A549 (cell line): ENCODE measurements at regions of chr17 and their contacts with region 1.

Region 1: DNA sequence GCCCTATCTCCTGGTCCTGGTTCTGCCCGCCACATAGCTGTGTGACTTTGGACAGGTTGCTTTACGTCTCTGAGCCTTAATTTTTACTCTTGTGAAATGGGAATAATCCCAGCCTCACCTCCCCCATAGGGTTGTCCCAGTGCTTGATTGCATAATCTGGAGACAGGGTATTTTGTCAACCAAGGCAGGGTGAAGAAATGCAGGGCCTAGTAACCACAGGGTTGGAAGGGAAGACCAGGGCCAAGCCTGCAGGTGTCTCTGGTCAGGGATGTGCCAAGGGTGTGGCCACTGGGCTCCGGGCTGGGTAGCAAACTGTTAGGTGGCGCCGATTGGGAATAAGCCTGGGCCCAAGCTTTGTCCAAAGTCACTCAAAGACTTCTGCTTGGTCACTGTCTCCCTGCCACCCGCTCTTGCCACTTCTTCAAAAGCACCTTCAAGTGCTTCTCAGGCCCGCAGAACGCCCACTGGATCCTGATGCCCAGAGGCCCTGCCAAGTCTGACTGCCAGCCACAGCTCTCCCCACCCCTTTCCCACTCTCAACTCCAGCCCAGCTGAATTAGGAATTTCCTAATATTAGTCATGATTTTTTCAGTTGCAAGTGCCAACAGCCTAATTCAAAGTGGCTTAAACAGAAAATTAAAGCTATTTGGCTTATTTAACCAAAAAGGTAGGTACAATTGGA is 20.6 kb upstream of the COL1A1 start:
- DNase-seq: no peak
- ATAC-seq: no peak
- H3K4me3 ChIP-seq: no peak overlapping the region
- H3K27ac ChIP-seq: peak overlapping the region in 1 of 2 experiments; percentile 87; a peak in 3 of 6 replicates
- H3K4me1 ChIP-seq: peaks cover 43% of the 10 kb centered on the region
- CTCF ChIP-seq: no peak
- EP300 ChIP-seq: no peak
- POLR2A ChIP-seq: no peak
- RAD21 ChIP-seq: no peak

Region 2: GRCh38 chr17:50001140-50001714 is 220.8 kb before region 1 on chr17:
- CTCF ChIA-PET with region 1: no interaction called
- POLR2A ChIA-PET with region 1: no interaction called
- DNase-seq: no peak
- ATAC-seq: no peak
- H3K4me3 ChIP-seq: no peak overlapping the region
- H3K27ac ChIP-seq: no peak overlapping the region
- H3K4me1 ChIP-seq: peaks cover 19% of the 10 kb centered on the region
- CTCF ChIP-seq: no peak
- EP300 ChIP-seq: no peak
- POLR2A ChIP-seq: no peak
- RAD21 ChIP-seq: no peak

Region 3: GRCh38 chr17:50161023-50161910 is 60.7 kb before region 1 on chr17:
- CTCF ChIA-PET with region 1: no interaction called
- POLR2A ChIA-PET with region 1: no interaction called
- DNase-seq: peak; percentile 92 to 100
- ATAC-seq: peak; percentile 88 to 96
- H3K4me3 ChIP-seq: peak overlapping the region; percentile 74
- H3K27ac ChIP-seq: peak overlapping the region; percentile 80 to 86
- H3K4me1 ChIP-seq: peaks cover 9% of the 10 kb centered on the region; the same call in 2 of the 3 replicates
- CTCF ChIP-seq: peak; percentile 98
- EP300 ChIP-seq: no peak
- POLR2A ChIP-seq: peak; percentile 92
- RAD21 ChIP-seq: peak; percentile 72 to 80

Region 4: GRCh38 chr17:50238601-50239280 is 16.7 kb after region 1 on chr17:
- CTCF ChIA-PET with region 1: interaction called, 12 read pairs
- POLR2A ChIA-PET with region 1: no interaction called
- DNase-seq: peak in 1 of 2 experiments; percentile 59
- ATAC-seq: peak; percentile 98 to 99
- H3K4me3 ChIP-seq: no peak overlapping the region
- H3K27ac ChIP-seq: no peak overlapping the region
- H3K4me1 ChIP-seq: peaks cover 8% of the 10 kb centered on the region
- CTCF ChIP-seq: no peak
- EP300 ChIP-seq: no peak
- POLR2A ChIP-seq: no peak
- RAD21 ChIP-seq: no peak

Region 5: DNA sequence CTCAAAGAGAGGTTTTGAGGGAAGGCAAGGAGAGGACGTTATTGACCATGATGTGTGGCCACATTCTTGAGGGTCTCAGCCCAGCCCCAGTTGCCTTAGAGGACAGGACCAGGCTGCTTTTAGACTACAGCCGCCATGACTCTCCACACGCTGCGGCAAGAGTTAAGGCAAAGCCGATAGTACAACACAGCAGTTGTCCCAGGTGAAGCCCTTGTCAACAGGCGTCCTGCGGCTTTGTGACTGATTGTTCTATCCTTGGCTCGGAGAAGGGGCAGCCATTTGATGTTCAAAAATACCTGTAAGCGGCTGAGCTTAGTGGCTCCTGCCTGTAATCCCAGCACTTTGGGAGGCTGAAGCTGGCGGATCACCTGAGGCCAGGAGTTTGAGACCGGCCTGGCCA is 81.0 kb after region 1 on chr17:
- CTCF ChIA-PET with region 1: interaction called, 935 read pairs
- POLR2A ChIA-PET with region 1: interaction called, 10 read pairs
- DNase-seq: no peak
- ATAC-seq: no peak
- H3K4me3 ChIP-seq: no peak overlapping the region
- H3K27ac ChIP-seq: no peak overlapping the region
- H3K4me1 ChIP-seq: no peaks in the 10 kb centered on the region
- CTCF ChIP-seq: no peak
- EP300 ChIP-seq: no peak
- POLR2A ChIP-seq: no peak
- RAD21 ChIP-seq: no peak